AG04450 (cell line): ENCODE measurements at regions of chr3 and their contacts with region 1.

Region 1: GRCh38 chr3:29280404-29281093 is at the start of gene RBMS3:
- DNase-seq: peak; percentile 91
- H3K4me3 ChIP-seq: peak within 1 kb of the TSS; percentile 81
- H3K27ac ChIP-seq: peak within 1 kb of the TSS; percentile 93
- H3K27me3 ChIP-seq: no peaks in the 10 kb centered on the region
- CTCF ChIP-seq: peak; percentile 72
- polyA plus RNA-seq, gene RBMS3: 32.0 and 33.4 TPM in 2 replicates

Region 2: DNA sequence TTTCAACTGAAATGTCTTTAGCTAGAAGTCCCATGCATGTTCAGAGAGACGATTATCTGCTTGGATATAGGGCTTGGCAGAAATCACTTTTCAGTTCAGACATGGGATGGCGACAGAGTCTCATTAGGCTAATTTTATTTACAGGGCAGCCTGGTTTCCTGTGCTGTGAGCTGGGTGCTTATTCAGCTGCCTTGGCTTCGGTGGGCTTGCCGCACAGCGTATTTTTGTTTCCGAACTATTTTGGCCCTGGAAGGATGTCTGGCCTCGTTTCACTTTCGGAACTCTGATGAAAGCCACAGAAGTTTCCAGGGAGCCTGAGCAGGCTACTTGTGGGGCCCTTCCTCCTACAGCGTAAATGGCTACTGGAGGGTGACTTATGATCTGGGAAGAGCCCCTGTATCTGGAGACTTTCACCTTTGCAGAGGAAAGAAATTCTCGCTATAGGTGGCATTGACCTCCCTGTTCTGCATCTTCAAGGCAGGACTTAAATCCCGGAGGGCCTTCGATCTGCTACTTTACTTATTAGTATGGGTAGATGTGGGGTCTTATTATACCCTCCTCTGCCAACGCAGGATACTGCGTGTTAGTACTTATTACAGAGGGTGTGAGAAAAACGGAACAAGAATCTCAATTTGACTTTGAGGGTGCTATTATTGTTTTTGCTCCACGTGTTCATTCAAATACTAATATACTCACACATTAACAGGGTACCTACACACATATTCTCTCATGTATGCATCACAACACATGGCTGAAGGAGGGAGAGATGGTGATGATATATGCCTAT is 363.6 kb before region 1 on chr3:
- CTCF ChIA-PET with region 1: interaction called, 10 read pairs
- POLR2A ChIA-PET with region 1: no interaction called
- DNase-seq: peak; percentile 32
- H3K4me3 ChIP-seq: peak overlapping the region; percentile 48
- H3K27ac ChIP-seq: peak overlapping the region; percentile 47
- H3K27me3 ChIP-seq: no peaks in the 10 kb centered on the region
- CTCF ChIP-seq: peak; percentile 49

Region 3: GRCh38 chr3:28982906-28983305 is 297.6 kb before region 1 on chr3:
- CTCF ChIA-PET with region 1: no interaction called
- POLR2A ChIA-PET with region 1: no interaction called
- DNase-seq: no peak
- H3K4me3 ChIP-seq: no peak overlapping the region
- H3K27ac ChIP-seq: no peak overlapping the region
- H3K27me3 ChIP-seq: no peaks in the 10 kb centered on the region
- CTCF ChIP-seq: no peak

Region 4: GRCh38 chr3:29267226-29267625 is 13.3 kb before region 1 on chr3:
- CTCF ChIA-PET with region 1: no interaction called
- POLR2A ChIA-PET with region 1: no interaction called
- DNase-seq: no peak
- H3K4me3 ChIP-seq: no peak overlapping the region
- H3K27ac ChIP-seq: no peak overlapping the region
- H3K27me3 ChIP-seq: no peaks in the 10 kb centered on the region
- CTCF ChIP-seq: no peak

Region 5: GRCh38 chr3:29301332-29302019 is 20.9 kb after region 1 on chr3:
- CTCF ChIA-PET with region 1: no interaction called
- POLR2A ChIA-PET with region 1: no interaction called
- DNase-seq: no peak
- H3K4me3 ChIP-seq: no peak overlapping the region
- H3K27ac ChIP-seq: no peak overlapping the region
- H3K27me3 ChIP-seq: no peaks in the 10 kb centered on the region
- CTCF ChIP-seq: no peak

Region 6: DNA sequence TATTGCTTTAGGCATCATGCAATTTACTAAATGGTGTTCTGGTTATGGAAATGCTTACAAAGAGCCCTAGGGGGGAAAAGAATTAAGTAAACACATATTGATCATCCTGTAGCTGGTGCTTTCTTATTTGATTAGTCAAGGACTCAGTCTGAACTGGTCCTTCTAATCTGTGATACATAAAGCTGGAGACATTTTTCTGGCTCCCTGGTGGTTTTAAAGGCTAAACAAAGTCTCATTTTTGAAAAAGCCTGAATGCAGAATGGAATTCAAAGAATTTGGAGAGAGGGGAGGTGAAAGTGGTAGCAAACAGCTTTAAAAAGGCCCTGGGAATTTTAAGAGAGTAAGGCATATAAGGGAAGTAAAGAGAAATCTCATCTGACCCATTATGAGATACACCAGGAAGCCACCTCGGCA is 150.0 kb after region 1 on chr3:
- CTCF ChIA-PET with region 1: interaction called, 3 read pairs
- POLR2A ChIA-PET with region 1: interaction called, 10 read pairs
- DNase-seq: peak; percentile 51
- H3K4me3 ChIP-seq: no peak overlapping the region
- H3K27ac ChIP-seq: no peak overlapping the region
- H3K27me3 ChIP-seq: no peaks in the 10 kb centered on the region
- CTCF ChIP-seq: no peak